Caco-2 (cell line): ENCODE measurements at regions of chr20 and their contacts with region 1.

Region 1: DNA sequence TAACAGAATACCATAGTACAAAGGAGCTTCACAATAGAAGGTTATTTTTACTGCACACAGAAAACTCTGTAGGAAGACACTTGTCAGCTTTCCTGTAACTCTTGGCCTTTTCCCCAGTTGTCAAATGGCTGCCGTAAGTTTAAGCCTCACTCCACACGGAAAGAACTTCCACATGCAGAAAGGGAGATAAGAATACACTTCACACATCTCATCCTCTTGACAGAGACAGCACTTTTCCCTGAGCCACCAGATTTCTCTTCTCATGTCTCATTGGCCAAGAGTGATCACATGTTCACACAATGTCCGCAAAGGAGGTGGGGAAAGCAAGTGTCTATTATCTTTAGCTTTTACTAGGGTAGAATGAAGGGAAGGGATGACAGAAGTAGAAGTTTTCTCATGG is 540.7 kb downstream of the HAO1 start:
- DNase-seq: no peak
- H3K4me3 ChIP-seq: no peak overlapping the region
- H3K4me3 Mint-ChIP-seq: peak overlapping the region; percentile 10
- H3K27ac Mint-ChIP-seq: no peak overlapping the region
- H3K4me1 ChIP-seq: no peaks in the 10 kb centered on the region
- H3K4me1 Mint-ChIP-seq: peaks cover 7% of the 10 kb centered on the region
- H3K27me3 ChIP-seq: no peaks in the 10 kb centered on the region; the same call in 1 of the 2 replicates
- H3K27me3 Mint-ChIP-seq: peaks cover 3% of the 10 kb centered on the region
- CTCF ChIP-seq: no peak

Region 2: DNA sequence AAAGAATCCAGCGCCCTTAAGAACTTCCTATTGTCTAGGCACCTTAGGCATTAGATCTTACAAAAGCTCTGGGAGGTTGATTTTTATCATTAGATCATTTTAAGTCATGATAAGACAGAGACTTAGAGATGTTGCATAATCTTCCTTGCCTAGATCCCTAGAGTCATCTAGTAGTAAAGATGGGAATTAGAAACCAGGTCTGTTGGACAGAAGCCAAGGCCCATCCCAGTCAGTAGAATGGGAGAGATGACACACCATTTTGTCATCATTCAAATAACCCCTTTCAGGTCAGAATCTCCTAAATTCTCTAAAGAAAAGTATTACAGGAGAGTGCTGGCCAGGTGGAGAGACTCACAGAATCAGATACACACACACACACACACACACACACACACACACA is 53.0 kb before region 1 on chr20:
- CTCF ChIA-PET with region 1: no interaction called
- POLR2A ChIA-PET with region 1: no interaction called
- intact Hi-C with region 1: loop called (anchors 5 kb)
- DNase-seq: no peak
- H3K4me3 ChIP-seq: no peak overlapping the region
- H3K4me3 Mint-ChIP-seq: no peak overlapping the region
- H3K27ac Mint-ChIP-seq: no peak overlapping the region
- H3K4me1 ChIP-seq: no peaks in the 10 kb centered on the region
- H3K4me1 Mint-ChIP-seq: no peaks in the 10 kb centered on the region
- H3K27me3 ChIP-seq: no peaks in the 10 kb centered on the region; the same call in 1 of the 2 replicates
- H3K27me3 Mint-ChIP-seq: peaks cover 11% of the 10 kb centered on the region
- CTCF ChIP-seq: no peak